Endothelial cell of umbilical vein (primary cell): ENCODE measurements at regions of chr1 and their contacts with region 1.

Region 1: DNA sequence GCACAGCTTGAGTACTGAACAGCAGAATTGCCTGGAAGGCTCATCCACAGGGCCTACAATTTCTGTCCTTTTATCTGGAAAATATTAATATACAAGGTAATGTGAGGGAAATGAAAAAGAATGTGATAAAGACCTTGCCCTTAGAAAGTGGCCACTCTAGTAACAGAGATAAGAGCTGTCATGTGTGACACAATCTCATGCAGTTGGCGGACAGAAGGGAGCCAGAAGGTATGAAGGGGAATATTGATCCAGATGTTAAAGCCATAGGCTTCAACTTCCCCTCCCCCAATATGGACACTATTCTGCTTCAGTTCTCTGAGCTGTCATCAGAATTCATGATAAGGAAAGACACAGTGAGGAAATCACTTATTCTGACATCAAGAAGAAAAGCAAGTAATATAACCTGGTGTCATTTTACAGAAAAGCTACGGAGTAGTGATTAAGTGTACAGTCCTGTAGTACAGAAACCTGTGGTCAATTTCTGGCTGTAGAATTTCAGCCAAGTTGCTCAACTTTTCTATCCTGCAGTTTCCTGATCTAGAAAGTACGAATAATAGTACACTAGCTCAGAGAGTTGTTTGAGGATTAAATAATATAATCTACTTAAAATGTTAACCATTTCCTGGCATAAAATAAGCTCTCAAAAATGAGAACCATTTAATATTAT is 572.1 kb downstream of the DPYD start:
- DNase-seq: no peak
- H3K4me3 ChIP-seq: no peak overlapping the region
- H3K27ac ChIP-seq: no peak overlapping the region
- H3K4me1 ChIP-seq: no peaks in the 10 kb centered on the region
- H3K27me3 ChIP-seq: no peaks in the 10 kb centered on the region
- CTCF ChIP-seq: no peak
- POLR2A ChIP-seq: no peak

Region 2: DNA sequence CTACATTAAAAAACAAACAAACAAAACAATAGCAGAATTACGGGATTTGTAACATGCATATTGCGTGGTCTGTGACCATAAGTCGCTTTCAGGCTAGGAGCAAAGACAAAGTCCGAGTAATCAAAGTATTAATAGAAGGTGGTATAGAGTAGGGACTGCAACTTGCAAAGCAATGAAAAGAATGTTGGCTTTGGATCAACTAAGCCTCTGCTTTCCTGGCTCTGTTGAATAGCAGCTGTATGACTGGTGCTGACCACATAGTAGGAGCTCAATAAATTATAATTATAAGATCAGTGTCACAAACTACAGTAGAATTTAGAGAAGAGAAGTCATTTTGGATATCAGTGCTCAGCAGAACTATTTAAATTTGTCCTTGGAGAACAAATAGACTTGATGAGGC is 14.3 kb before region 1 on chr1:
- CTCF ChIA-PET with region 1: interaction called, 10 read pairs
- POLR2A ChIA-PET with region 1: no interaction called
- dilution Hi-C with region 1: no loop called
- intact Hi-C with region 1: no loop called
- DNase-seq: peak; percentile 13
- H3K4me3 ChIP-seq: no peak overlapping the region
- H3K27ac ChIP-seq: no peak overlapping the region
- H3K4me1 ChIP-seq: no peaks in the 10 kb centered on the region
- H3K27me3 ChIP-seq: no peaks in the 10 kb centered on the region
- CTCF ChIP-seq: no peak
- POLR2A ChIP-seq: no peak

Region 3: DNA sequence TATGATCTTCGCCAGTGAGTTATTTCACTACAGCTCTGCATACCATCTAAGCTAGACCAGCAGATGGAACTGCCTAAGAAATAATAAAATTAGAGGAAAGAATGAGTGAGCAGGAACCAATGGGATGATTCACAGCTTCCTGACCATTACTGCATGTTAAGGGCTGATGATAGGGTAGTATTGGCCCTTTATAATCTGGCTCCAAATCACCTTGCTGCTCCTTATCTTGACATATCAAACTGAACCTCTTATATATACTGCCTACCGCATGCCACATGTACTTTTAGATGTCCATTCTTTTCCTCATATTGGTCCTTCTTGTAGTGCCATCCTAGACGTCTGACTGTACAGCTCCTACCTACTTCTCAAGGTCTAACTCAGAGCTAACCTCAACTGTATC is 47.7 kb after region 1 on chr1:
- CTCF ChIA-PET with region 1: no interaction called
- POLR2A ChIA-PET with region 1: no interaction called
- dilution Hi-C with region 1: no loop called
- intact Hi-C with region 1: no loop called
- DNase-seq: peak; percentile 73
- H3K4me3 ChIP-seq: no peak overlapping the region
- H3K27ac ChIP-seq: no peak overlapping the region
- H3K4me1 ChIP-seq: peaks cover 13% of the 10 kb centered on the region
- H3K27me3 ChIP-seq: no peaks in the 10 kb centered on the region
- CTCF ChIP-seq: no peak
- POLR2A ChIP-seq: no peak

Region 4: GRCh38 chr1:97603776-97604175 is 255.0 kb after region 1 on chr1:
- CTCF ChIA-PET with region 1: no interaction called
- POLR2A ChIA-PET with region 1: no interaction called
- dilution Hi-C with region 1: no loop called
- intact Hi-C with region 1: no loop called
- DNase-seq: peak; percentile 90
- H3K4me3 ChIP-seq: peak overlapping the region in 1 of 3 experiments; percentile 33
- H3K27ac ChIP-seq: peak overlapping the region; percentile 62
- H3K4me1 ChIP-seq: peaks cover 30% of the 10 kb centered on the region
- H3K27me3 ChIP-seq: no peaks in the 10 kb centered on the region
- CTCF ChIP-seq: no peak
- POLR2A ChIP-seq: no peak